ENCODE measurements at regions of chr15 and their contacts with region 1.

Region 1: DNA sequence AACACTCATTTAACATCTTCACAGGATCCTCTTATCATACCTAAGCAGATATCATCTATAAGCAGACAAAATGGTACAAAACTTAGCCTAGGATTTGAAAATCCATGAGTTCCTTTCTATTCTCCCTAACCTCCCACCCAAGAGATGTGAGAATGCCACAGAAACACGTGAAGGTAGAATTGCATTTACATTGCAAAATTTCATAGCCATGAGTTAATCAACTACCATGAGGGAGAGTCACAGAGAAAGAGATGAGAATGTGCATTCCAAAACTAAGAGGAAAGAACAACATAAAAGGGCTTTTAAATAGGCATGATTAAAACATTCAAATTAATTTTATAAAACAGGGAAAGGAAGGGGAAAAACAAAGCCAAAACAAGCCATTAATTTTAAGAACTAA is 806.2 kb downstream of the NTRK3 start:
- DNase-seq: no peak
- ATAC-seq: no peak
- H3K4me3 ChIP-seq: no peak overlapping the region
- H3K27ac ChIP-seq: no peak overlapping the region
- H3K4me1 ChIP-seq: no peaks in the 10 kb centered on the region
- H3K27me3 ChIP-seq: no peaks in the 10 kb centered on the region
- CTCF ChIP-seq: no peak
- EP300 ChIP-seq: no peak
- POLR2A ChIP-seq: no peak
- RAD21 ChIP-seq: no peak

Region 2: GRCh38 chr15:86425746-86426145 is 1024.6 kb before region 1 on chr15:
- CTCF ChIA-PET with region 1: no interaction called
- POLR2A ChIA-PET with region 1: no interaction called
- RAD21 ChIA-PET with region 1: no interaction called
- SMC1A ChIA-PET with region 1: no interaction called
- in situ Hi-C with region 1: no loop called
- intact Hi-C with region 1: no loop called
- DNase-seq: no peak
- ATAC-seq: no peak
- H3K4me3 ChIP-seq: no peak overlapping the region
- H3K27ac ChIP-seq: no peak overlapping the region
- H3K4me1 ChIP-seq: no peaks in the 10 kb centered on the region
- H3K27me3 ChIP-seq: no peaks in the 10 kb centered on the region
- CTCF ChIP-seq: no peak
- EP300 ChIP-seq: no peak
- POLR2A ChIP-seq: no peak
- RAD21 ChIP-seq: no peak

Region 3: DNA sequence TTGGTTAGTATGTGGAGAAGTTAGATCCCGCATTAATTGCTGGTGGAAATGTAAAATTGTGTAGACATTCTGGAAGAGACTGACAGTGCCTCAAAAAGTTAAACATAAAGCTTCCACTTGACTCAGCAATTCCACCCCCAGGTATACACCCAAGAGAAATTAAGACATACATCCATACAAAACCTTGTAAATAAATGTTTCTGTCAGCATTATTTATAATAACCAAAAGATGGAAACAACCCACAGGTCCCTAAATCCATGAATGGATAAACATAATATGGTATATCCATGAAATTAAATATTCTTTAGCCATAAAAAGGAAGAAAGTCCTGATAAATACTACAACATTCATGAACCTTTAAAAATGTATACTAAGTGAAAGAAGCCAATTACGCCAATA is 11.2 kb before region 1 on chr15:
- CTCF ChIA-PET with region 1: no interaction called
- POLR2A ChIA-PET with region 1: no interaction called
- RAD21 ChIA-PET with region 1: no interaction called
- SMC1A ChIA-PET with region 1: no interaction called
- in situ Hi-C with region 1: no loop called
- intact Hi-C with region 1: loop called (anchors 1 kb)
- DNase-seq: no peak
- ATAC-seq: no peak
- H3K4me3 ChIP-seq: no peak overlapping the region
- H3K27ac ChIP-seq: no peak overlapping the region
- H3K4me1 ChIP-seq: no peaks in the 10 kb centered on the region
- H3K27me3 ChIP-seq: no peaks in the 10 kb centered on the region
- CTCF ChIP-seq: no peak
- EP300 ChIP-seq: no peak
- POLR2A ChIP-seq: no peak
- RAD21 ChIP-seq: no peak

Measured in GM12878 (cell line).